ENCODE measurements at regions of chr14 and their contacts with region 1.

Region 1: GRCh38 chr14:88824314-88825077 is at the start of gene TTC8:
- DNase-seq: peak; percentile 87
- H3K4me3 ChIP-seq: peak within 1 kb of the TSS; percentile 75 to 95
- H3K27ac ChIP-seq: peak within 1 kb of the TSS; percentile 81 to 100
- H3K4me1 ChIP-seq: peaks cover 10 to 27% of the 10 kb centered on the region in 2 experiments; a peak in 3 of 4 replicates
- H3K27me3 ChIP-seq: no peaks in the 10 kb centered on the region
- CTCF ChIP-seq: no peak
- EP300 ChIP-seq: peak; percentile 33 to 52; a peak in 2 of 4 replicates
- RAD21 ChIP-seq: peak; percentile 12
- polyA plus RNA-seq, gene TTC8: 51.6 and 73.9 TPM in 2 replicates

Region 2: GRCh38 chr14:88792572-88793258 is 31.8 kb before region 1 on chr14 and contains the start of gene EML5:
- CTCF ChIA-PET with region 1: interaction called, 46 read pairs
- POLR2A ChIA-PET with region 1: interaction called, 92 read pairs
- DNase-seq: peak; percentile 91
- H3K4me3 ChIP-seq: peak within 1 kb of the TSS; percentile 59 to 62
- H3K27ac ChIP-seq: peak within 1 kb of the TSS in 1 of 2 experiments; percentile 94; a peak in 2 of 4 replicates
- H3K4me1 ChIP-seq: peaks cover 0 to 2% of the 10 kb centered on the region in 2 experiments; a peak in 2 of 4 replicates
- H3K27me3 ChIP-seq: peaks cover 20% of the 10 kb centered on the region
- CTCF ChIP-seq: no peak
- EP300 ChIP-seq: no peak
- RAD21 ChIP-seq: peak; percentile 62
- polyA plus RNA-seq, gene EML5: 0.23 and 1.1 TPM in 2 replicates

Region 3: GRCh38 chr14:88849716-88850115 is 25.2 kb after region 1 on chr14:
- CTCF ChIA-PET with region 1: interaction called, 4 read pairs
- POLR2A ChIA-PET with region 1: interaction called, 87 read pairs
- DNase-seq: no peak
- H3K4me3 ChIP-seq: no peak overlapping the region
- H3K27ac ChIP-seq: peak overlapping the region in 1 of 2 experiments; percentile 60; a peak in 2 of 4 replicates
- H3K4me1 ChIP-seq: peaks cover 0 to 29% of the 10 kb centered on the region in 2 experiments; a peak in 2 of 4 replicates
- H3K27me3 ChIP-seq: no peaks in the 10 kb centered on the region
- CTCF ChIP-seq: no peak
- EP300 ChIP-seq: no peak
- RAD21 ChIP-seq: no peak

Region 4: DNA sequence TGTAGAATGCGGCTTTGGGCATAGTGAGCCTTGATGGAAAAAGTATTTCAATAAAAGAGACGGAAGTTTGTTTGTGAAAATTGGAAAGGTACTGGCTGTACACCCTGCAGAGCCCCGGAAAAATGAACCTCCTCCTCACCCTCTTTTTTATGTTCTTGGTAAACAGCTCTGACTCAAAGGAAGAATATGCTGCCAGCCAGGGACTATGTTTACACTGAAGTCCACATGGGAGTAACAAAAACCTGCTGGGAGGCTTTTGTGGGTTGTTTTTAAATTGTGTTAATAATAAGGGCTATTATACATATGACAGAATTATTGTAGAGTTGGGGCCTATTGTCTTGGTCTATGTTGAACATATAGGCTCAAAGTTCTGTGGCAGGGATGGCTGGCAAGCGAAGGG is 70.6 kb after region 1 on chr14:
- CTCF ChIA-PET with region 1: interaction called, 49 read pairs
- POLR2A ChIA-PET with region 1: interaction called, 38 read pairs
- DNase-seq: no peak
- H3K4me3 ChIP-seq: no peak overlapping the region
- H3K27ac ChIP-seq: no peak overlapping the region
- H3K4me1 ChIP-seq: peaks cover 0 to 16% of the 10 kb centered on the region in 2 experiments; a peak in 1 of 4 replicates
- H3K27me3 ChIP-seq: no peaks in the 10 kb centered on the region
- CTCF ChIP-seq: no peak
- EP300 ChIP-seq: no peak
- RAD21 ChIP-seq: no peak

Region 5: GRCh38 chr14:88986146-88986841 is 161.8 kb after region 1 on chr14:
- CTCF ChIA-PET with region 1: no interaction called
- POLR2A ChIA-PET with region 1: interaction called, 21 read pairs
- DNase-seq: peak; percentile 69
- H3K4me3 ChIP-seq: no peak overlapping the region
- H3K27ac ChIP-seq: peak overlapping the region; percentile 84 to 100
- H3K4me1 ChIP-seq: peaks cover 0 to 59% of the 10 kb centered on the region in 2 experiments; a peak in 2 of 4 replicates
- H3K27me3 ChIP-seq: no peaks in the 10 kb centered on the region
- CTCF ChIP-seq: no peak
- EP300 ChIP-seq: peak; percentile 33 to 78; a peak in 3 of 4 replicates
- RAD21 ChIP-seq: peak; percentile 2; the same call in 1 of the 2 replicates

Measured in SK-N-SH (cell line).